Posterior cingulate gyrus (tissue), 11 donors: ENCODE measurements at regions of chr12 and their contacts with region 1.

Region 1: DNA sequence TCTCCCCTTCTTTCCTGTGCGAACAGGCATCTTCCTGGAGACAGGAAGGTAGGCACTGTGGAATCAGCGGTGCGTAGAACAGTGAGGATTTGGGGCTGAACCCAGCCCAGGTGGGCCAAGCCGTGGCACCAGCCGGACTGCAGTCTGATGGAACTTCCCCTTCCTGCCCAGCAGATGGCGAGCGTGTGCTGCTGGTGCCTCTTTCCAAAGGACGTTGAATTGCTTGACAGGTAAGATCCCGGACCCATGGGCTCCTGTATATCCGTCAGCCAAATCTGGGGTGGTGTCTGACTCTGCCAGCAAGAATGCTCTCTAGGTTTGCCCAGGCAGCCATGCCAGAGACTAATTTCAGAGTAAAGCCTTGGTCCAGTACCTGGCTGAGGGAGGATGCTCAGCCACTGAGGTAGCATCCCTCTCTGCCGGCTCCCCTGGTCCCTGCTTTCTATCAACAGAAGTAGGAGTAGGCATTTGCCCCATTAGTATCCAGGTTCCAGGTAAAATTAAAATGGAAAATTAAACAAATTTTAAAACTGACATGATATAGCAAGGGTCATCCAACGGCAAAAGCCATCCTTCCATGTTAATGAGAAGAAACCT is 21.1 kb upstream of the KCNA5 start:
- DNase-seq: peak in 3 of 10 donors; percentile 49 to 89 (median 50)

Region 2: GRCh38 chr12:5083955-5084849 is 61.6 kb after region 1 on chr12:
- intact Hi-C with region 1: loop called (anchors 1 kb)
- DNase-seq: peak in 3 of 10 donors; percentile 32 to 45 (median 39)